Transverse colon (tissue), 4 donors: ENCODE measurements at regions of chr1 and their contacts with region 1.

Region 1: DNA sequence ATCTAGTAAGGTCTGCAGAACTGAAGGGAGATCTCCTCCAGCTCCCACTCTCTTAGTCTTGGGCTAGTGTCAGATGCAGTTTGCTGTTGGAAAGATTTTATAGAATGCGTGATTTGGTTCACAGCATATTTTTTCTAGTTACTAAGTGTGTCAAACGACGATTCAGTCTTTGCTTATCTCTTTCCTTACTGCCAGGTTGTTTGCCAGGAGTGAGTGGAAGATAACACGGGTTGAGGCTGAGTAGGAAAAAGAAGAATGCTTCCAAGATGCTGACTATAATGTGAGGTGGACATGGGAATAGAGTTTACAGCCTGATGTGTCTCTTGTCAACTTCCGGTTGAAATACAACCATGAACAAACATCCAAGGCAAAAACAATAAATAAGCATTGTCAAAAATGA is 141.4 kb downstream of the GDAP2 start:
- DNase-seq: no peak
- H3K4me3 ChIP-seq: no peak overlapping the region
- H3K27ac ChIP-seq: no peak overlapping the region
- H3K4me1 ChIP-seq: no peaks in the 10 kb centered on the region
- H3K27me3 ChIP-seq: no peaks in the 10 kb centered on the region
- CTCF ChIP-seq: no peak
- EP300 ChIP-seq: no peak
- POLR2A ChIP-seq: no peak

Region 2: DNA sequence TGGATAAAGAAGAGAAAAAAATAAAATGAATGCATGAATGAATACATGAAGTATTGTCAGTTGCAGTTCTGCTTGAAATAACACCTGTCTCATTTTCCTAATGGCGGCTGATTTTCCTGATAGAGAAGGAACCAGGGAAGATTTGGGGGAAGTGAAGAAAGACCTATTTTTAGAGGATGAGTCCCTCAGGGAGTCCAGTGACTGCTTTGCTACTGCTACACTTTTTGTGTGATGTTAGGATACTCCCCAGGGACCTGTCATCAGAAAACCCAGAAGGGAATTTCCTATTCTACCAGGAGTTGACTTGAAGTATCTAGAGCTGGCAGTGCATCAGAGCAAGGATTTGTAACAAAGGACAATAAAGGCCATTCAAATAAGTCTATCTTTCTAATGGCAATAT is 1562.0 kb before region 1 on chr1:
- in situ Hi-C with region 1: no loop called
- intact Hi-C with region 1: loop called (anchors 5 kb)
- DNase-seq: no peak
- H3K4me3 ChIP-seq: no peak overlapping the region
- H3K27ac ChIP-seq: no peak overlapping the region
- H3K4me1 ChIP-seq: peaks cover 0 to 7% (median 0%) of the 10 kb centered on the region in 4 donors
- H3K27me3 ChIP-seq: no peaks in the 10 kb centered on the region
- CTCF ChIP-seq: no peak
- EP300 ChIP-seq: no peak
- POLR2A ChIP-seq: no peak

Region 3: GRCh38 chr1:117032681-117033539 is 755.1 kb before region 1 on chr1:
- in situ Hi-C with region 1: no loop called
- intact Hi-C with region 1: loop called (anchors 5 kb)
- DNase-seq: no peak
- H3K4me3 ChIP-seq: no peak overlapping the region
- H3K27ac ChIP-seq: no peak overlapping the region
- H3K4me1 ChIP-seq: no peaks in the 10 kb centered on the region
- H3K27me3 ChIP-seq: no peaks in the 10 kb centered on the region
- CTCF ChIP-seq: no peak
- EP300 ChIP-seq: no peak
- POLR2A ChIP-seq: no peak